Natural killer cell (primary cell): ENCODE measurements at regions of chr3 and their contacts with region 1.

Region 1: GRCh38 chr3:152365766-152366593 is 97.3 kb downstream of the MBNL1 start:
- DNase-seq: no peak
- ATAC-seq: peak in 1 of 3 donors; percentile 63
- H3K4me3 ChIP-seq: no peak overlapping the region
- H3K4me3 Mint-ChIP-seq: no peak overlapping the region
- H3K27ac ChIP-seq: no peak overlapping the region
- H3K27ac Mint-ChIP-seq: peak overlapping the region; percentile 78 to 82
- H3K4me1 ChIP-seq: peaks cover 3% of the 10 kb centered on the region
- H3K4me1 Mint-ChIP-seq: peaks cover 79 to 85% of the 10 kb centered on the region in 2 donors
- H3K27me3 ChIP-seq: no peaks in the 10 kb centered on the region
- H3K27me3 Mint-ChIP-seq: no peaks in the 10 kb centered on the region
- CTCF ChIP-seq: no peak

Region 2: DNA sequence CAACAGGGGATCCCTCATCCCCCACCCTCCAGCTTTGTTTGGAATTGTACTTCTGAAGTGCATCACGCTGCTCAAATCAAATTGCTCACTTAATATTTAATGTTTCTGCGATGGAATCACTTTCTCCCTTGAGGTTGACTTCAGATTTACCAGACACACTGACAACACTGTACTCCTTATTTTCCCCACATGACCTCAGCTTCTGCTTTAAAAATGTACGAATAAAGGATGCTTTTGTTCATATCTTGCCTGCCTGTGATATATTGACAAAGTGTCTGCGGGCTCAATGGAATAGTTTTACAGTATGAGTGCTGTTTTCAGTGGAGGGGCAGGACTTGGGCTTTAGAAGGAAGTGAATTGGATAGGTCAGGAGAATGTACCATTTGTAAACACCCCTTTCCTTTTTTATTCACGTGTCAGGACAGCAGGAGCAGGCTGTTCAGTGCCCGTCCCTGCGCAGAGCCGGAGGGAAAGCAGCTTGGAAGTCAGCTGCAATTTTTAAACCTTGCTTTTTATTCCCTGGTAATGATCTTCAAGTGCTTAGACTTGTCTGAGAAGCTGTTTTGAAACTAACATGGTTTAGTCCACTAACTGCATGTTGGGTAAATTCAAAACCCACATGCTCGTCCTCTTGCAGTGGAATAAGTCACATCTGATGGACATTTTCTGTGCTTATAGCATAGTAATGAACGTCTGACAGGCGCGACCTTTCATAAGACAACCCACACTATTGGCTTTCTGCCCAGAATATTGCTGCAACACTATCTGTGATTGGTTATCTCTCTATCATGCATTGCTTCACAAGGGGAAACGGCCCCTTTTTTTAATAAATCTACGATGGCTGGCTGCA is 67.4 kb before region 1 on chr3:
- intact Hi-C with region 1: no loop called
- DNase-seq: peak; percentile 35 to 90
- ATAC-seq: peak; percentile 71 to 86 (median 78)
- H3K4me3 ChIP-seq: no peak overlapping the region
- H3K4me3 Mint-ChIP-seq: peak overlapping the region; percentile 71
- H3K27ac ChIP-seq: peak overlapping the region; percentile 60
- H3K27ac Mint-ChIP-seq: peak overlapping the region; percentile 76 to 89
- H3K4me1 ChIP-seq: peaks cover 42% of the 10 kb centered on the region
- H3K4me1 Mint-ChIP-seq: peaks cover 57 to 76% of the 10 kb centered on the region in 2 donors
- H3K27me3 ChIP-seq: no peaks in the 10 kb centered on the region
- H3K27me3 Mint-ChIP-seq: no peaks in the 10 kb centered on the region
- CTCF ChIP-seq: no peak

Region 3: GRCh38 chr3:152331018-152331541 is 34.9 kb before region 1 on chr3:
- intact Hi-C with region 1: loop called (anchors 5 kb)
- DNase-seq: no peak
- ATAC-seq: peak in 1 of 3 donors; percentile 13
- H3K4me3 ChIP-seq: no peak overlapping the region
- H3K4me3 Mint-ChIP-seq: peak overlapping the region; percentile 35
- H3K27ac ChIP-seq: no peak overlapping the region
- H3K27ac Mint-ChIP-seq: peak overlapping the region; percentile 74 to 77
- H3K4me1 ChIP-seq: peaks cover 29% of the 10 kb centered on the region
- H3K4me1 Mint-ChIP-seq: peaks cover 65 to 82% of the 10 kb centered on the region in 2 donors
- H3K27me3 ChIP-seq: no peaks in the 10 kb centered on the region
- H3K27me3 Mint-ChIP-seq: no peaks in the 10 kb centered on the region
- CTCF ChIP-seq: no peak

Region 4: DNA sequence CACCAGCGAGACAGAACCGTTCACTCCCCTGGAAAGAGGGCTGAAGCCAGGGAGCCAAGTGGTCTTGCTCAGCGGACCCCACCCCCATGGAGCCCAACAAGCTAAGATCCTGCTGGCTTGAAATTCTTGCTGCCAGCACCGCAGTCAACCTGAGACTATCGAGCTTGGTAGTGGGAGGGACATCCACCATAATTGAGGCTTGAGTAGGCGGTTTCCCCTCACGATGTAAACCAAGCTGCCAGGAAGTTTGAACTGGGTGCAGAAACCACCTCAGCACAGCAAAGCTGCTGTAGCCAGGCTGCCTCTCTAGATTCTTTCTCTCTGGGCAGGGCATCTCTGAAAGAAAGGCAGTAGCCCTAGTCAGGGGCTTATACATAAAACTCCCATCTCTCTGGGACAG is 53.8 kb after region 1 on chr3:
- intact Hi-C with region 1: no loop called
- DNase-seq: no peak
- ATAC-seq: peak; percentile 72 to 91 (median 79)
- H3K4me3 ChIP-seq: no peak overlapping the region
- H3K4me3 Mint-ChIP-seq: peak overlapping the region; percentile 28
- H3K27ac ChIP-seq: peak overlapping the region; percentile 35
- H3K27ac Mint-ChIP-seq: peak overlapping the region; percentile 80 to 94
- H3K4me1 ChIP-seq: peaks cover 14% of the 10 kb centered on the region
- H3K4me1 Mint-ChIP-seq: peaks cover 77 to 85% of the 10 kb centered on the region in 2 donors
- H3K27me3 ChIP-seq: no peaks in the 10 kb centered on the region
- H3K27me3 Mint-ChIP-seq: no peaks in the 10 kb centered on the region
- CTCF ChIP-seq: no peak

Region 5: GRCh38 chr3:152471814-152472671 is 106.1 kb after region 1 on chr3:
- intact Hi-C with region 1: no loop called
- DNase-seq: peak; percentile 62 to 87
- ATAC-seq: peak; percentile 93 to 96 (median 94)
- H3K4me3 ChIP-seq: peak overlapping the region; percentile 16
- H3K4me3 Mint-ChIP-seq: peak overlapping the region; percentile 63
- H3K27ac ChIP-seq: peak overlapping the region; percentile 43
- H3K27ac Mint-ChIP-seq: peak overlapping the region; percentile 82 to 90
- H3K4me1 ChIP-seq: peaks cover 9% of the 10 kb centered on the region
- H3K4me1 Mint-ChIP-seq: peaks cover 8 to 16% of the 10 kb centered on the region in 2 donors
- H3K27me3 ChIP-seq: no peaks in the 10 kb centered on the region
- H3K27me3 Mint-ChIP-seq: no peaks in the 10 kb centered on the region
- CTCF ChIP-seq: peak; percentile 76

Region 6: DNA sequence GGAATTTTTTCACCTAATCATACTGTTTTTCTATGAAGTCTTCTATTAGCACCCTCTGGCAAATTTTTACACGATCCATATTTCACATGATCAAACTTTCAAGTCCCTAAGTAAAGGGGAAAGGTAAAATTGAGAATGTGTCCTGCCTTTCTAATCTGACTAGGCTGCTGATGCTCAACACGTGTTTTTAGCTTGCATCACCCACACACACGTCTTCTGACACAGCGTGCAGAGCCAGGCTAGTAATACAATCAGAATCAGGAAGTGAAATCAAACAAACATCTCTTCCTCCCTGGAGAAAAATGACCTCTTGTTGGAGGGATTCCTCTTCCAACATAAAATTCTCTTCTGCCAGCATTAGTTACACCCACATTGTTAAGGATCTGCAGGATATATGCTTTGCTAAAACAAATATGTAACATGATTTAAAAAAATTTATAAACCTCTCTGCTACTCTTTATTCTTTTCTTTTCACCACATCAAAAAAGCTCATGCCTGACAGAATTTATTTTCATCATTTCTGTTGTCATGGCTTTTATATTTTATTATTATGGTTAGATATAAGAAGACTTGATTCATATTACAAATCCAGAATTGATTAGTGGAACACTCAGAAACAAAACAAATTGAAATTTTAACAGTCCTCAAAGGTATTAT is 918.4 kb after region 1 on chr3:
- intact Hi-C with region 1: no loop called
- DNase-seq: peak in 1 of 2 donors; percentile 66
- ATAC-seq: peak; percentile 73 to 86 (median 84)
- H3K4me3 ChIP-seq: no peak overlapping the region
- H3K4me3 Mint-ChIP-seq: peak overlapping the region; percentile 29
- H3K27ac ChIP-seq: peak overlapping the region; percentile 3
- H3K27ac Mint-ChIP-seq: peak overlapping the region; percentile 61 to 81
- H3K4me1 ChIP-seq: peaks cover 14% of the 10 kb centered on the region
- H3K4me1 Mint-ChIP-seq: peaks cover 36 to 41% of the 10 kb centered on the region in 2 donors
- H3K27me3 ChIP-seq: no peaks in the 10 kb centered on the region
- H3K27me3 Mint-ChIP-seq: no peaks in the 10 kb centered on the region
- CTCF ChIP-seq: no peak